ENCODE measurements at regions of chr3 and their contacts with region 1.

Region 1: DNA sequence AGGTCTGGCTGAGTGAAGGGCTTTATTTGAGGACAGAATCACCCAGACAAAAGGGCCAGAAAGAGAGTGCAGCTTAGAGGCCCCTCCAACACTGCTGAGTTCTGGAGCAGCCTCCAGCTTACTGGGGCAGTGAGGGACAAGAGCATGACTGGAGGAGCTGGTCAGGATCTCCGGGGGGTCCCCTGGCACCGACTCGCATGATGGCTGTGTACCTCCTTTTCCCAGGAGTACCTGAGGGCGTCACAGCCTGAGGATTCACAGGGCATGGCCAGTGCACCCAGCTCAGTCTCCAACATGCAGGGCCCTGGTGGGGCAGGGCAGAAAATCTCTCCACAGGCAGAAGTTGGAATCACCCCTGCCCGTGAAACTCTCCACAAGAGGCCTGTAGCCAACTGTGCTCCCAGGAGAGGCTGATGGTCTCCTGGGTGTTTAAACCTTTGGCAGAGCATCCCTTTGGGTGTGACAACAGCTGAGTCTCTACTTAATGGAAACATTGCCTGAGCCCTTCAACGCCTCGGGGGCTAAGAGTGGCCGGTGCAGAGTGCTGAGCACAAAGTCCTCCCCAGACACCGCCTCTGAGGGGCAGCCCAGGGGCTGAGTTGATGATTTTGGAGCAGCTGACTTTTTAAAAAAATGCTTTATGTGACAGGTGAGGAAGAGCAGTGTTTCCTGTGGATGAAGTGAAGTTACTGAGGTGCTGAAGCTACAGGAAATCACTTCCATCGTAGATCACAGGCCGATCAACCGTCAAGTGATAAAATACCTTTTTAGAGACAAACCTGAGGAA is 22.0 kb upstream of the CXCR6 start:
- DNase-seq: no peak
- H3K4me3 ChIP-seq: no peak overlapping the region
- H3K27me3 ChIP-seq: no peaks in the 10 kb centered on the region
- CTCF ChIP-seq: no peak

Region 2: GRCh38 chr3:44825264-44825925 is 1095.9 kb before region 1 on chr3:
- CTCF ChIA-PET with region 1: no interaction called
- POLR2A ChIA-PET with region 1: no interaction called
- DNase-seq: peak; percentile 68
- H3K4me3 ChIP-seq: no peak overlapping the region
- H3K27me3 ChIP-seq: no peaks in the 10 kb centered on the region
- CTCF ChIP-seq: no peak

Region 3: DNA sequence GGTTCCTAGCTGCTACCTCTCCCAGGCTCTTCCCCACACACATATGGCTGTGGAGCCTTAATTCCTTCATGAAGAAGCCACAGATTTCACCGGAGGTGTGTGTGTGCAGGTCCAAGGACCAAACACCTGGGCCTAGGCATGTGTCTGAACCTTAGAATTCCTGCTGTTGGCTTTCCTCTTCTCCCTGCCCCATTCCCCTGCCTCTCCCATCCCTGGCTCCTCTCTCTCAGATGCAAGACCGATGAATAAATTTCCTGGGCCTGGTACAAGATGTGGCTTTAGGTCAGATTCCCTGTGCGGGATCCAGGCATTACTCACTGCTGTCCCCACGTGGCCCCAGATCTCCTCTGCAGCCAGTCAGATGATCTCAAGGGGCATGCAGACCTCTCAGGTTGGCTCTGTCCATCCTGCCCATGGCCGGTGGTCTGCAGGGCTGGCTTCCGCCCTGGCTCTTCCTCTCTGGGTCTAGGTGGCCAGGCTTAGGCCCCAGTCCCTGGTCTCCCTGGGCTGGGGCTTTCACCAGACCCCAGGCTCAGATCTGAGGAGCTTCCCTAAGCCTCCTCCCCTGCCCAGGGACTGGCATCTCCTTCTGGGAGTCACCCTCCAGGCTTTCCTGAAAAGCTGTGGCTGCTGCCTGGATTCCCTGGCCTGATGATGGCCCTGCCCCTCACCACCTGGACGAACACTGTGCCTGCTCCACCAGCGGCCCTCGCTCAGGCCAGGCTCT is 14.4 kb before region 1 on chr3:
- CTCF ChIA-PET with region 1: interaction called, 11 read pairs
- POLR2A ChIA-PET with region 1: no interaction called
- DNase-seq: no peak
- H3K4me3 ChIP-seq: no peak overlapping the region
- H3K27me3 ChIP-seq: peaks cover 3% of the 10 kb centered on the region; the same call in 1 of the 2 replicates
- CTCF ChIP-seq: peak; percentile 74

Region 4: DNA sequence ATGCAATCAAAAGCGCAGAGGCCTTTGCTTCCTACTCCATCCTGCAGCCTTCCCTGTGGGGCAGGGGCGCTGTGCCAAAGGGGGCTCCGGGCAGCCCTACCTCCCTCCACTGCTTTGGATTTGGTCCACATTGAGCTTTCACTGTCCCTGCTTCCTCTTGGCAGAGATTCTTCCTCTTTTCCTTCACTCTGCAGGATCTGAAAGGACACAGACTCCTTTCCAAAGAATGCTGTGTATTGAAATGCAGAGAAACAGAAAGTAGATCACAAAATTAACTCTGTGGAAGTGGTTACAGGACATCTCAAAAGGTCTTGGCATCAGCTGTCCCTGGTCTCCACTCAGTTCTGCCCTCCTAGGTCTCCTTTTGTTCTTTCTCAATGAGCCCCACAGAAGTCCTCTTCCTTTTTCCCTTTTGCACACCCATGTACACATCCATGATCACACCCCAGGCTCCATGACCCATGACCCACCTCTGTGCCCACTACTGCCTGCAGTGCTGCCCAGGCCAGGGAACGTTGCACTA is 222.8 kb after region 1 on chr3:
- CTCF ChIA-PET with region 1: no interaction called
- POLR2A ChIA-PET with region 1: no interaction called
- DNase-seq: no peak
- H3K4me3 ChIP-seq: no peak overlapping the region
- H3K27me3 ChIP-seq: peaks cover 3% of the 10 kb centered on the region; the same call in 1 of the 2 replicates
- CTCF ChIP-seq: no peak